Aorta (tissue), 5 donors: ENCODE measurements at regions of chr15 and their contacts with region 1.

Region 1: DNA sequence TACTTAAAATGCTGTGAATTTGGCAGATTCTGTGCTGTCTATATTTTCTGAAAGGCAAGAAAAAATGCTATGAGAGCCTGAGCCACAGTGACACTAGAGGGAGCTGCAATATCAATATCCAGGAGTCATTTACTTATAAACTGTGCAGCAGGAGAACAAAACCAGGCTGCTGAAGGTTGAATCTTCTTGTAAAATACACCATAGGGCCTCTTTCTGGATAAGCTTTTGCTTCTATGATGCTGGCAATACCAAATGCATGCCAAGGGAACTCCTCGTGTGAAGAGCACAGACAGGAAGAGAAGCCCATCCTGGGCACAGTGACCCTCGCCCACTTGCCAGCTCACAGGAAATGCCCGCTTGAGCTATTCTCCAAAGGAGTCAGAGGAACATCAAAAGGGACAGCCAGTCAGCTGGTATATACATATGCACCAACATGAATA is 48.0 kb upstream of the TSPAN3 start:
- DNase-seq: no peak
- ATAC-seq: peak; percentile 39
- H3K4me3 ChIP-seq: no peak overlapping the region
- H3K27ac ChIP-seq: no peak overlapping the region
- H3K4me1 ChIP-seq: no peaks in the 10 kb centered on the region
- H3K27me3 ChIP-seq: no peaks in the 10 kb centered on the region

Region 2: GRCh38 chr15:76963596-76963995 is 155.3 kb before region 1 on chr15:
- intact Hi-C with region 1: no loop called
- DNase-seq: no peak
- ATAC-seq: no peak
- H3K4me3 ChIP-seq: no peak overlapping the region
- H3K27ac ChIP-seq: peak overlapping the region; percentile 29 to 38
- H3K4me1 ChIP-seq: peaks cover 0 to 5% of the 10 kb centered on the region in 2 donors
- H3K27me3 ChIP-seq: no peaks in the 10 kb centered on the region

Region 3: DNA sequence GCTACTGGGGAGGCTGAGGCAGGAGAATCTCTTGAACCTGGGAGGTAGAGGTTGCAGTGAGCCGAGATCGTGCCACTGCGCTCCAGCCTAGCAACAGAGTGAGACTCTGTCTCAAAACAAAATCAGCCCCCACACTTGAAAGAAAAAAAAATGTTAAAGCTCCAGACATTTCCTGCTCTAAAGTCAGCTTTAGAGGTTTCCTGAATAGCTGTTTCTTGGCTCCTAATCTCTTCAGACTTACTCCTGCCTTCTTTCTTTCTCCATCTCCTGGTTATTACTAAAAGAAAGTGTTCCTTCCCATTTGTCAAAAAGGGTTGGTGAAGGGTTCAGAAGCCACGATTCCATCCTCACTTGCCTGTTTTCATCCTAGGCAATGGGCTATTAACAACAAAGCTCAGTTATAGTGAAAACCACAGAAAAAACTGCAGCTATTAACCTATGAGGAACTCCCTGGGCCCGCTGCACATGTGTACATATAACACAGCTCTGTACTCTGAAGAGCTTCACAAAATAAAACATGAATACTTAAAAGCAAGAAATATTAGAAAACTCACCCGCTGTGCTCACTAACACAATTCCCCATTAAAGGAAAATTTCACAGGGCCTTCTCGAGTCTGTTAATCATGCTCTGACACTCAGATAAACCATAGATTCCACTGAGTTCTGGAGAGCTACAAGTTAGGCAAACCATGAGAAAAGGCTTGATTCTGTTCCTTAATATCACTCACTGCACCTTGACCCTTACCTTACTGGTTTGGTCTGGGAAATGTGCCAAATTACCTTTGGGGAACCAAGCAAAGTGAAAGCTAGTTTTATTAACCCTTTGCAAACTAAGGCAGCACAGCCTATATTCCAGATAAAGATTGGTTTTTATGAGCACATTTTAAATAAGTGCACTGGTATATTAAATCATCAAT is 41.9 kb after region 1 on chr15:
- intact Hi-C with region 1: loop called in 1 of 2 experiments (anchors 2 kb)
- DNase-seq: no peak
- ATAC-seq: no peak
- H3K4me3 ChIP-seq: no peak overlapping the region
- H3K27ac ChIP-seq: no peak overlapping the region
- H3K4me1 ChIP-seq: peaks cover 0 to 2% of the 10 kb centered on the region in 2 donors
- H3K27me3 ChIP-seq: no peaks in the 10 kb centered on the region

Region 4: DNA sequence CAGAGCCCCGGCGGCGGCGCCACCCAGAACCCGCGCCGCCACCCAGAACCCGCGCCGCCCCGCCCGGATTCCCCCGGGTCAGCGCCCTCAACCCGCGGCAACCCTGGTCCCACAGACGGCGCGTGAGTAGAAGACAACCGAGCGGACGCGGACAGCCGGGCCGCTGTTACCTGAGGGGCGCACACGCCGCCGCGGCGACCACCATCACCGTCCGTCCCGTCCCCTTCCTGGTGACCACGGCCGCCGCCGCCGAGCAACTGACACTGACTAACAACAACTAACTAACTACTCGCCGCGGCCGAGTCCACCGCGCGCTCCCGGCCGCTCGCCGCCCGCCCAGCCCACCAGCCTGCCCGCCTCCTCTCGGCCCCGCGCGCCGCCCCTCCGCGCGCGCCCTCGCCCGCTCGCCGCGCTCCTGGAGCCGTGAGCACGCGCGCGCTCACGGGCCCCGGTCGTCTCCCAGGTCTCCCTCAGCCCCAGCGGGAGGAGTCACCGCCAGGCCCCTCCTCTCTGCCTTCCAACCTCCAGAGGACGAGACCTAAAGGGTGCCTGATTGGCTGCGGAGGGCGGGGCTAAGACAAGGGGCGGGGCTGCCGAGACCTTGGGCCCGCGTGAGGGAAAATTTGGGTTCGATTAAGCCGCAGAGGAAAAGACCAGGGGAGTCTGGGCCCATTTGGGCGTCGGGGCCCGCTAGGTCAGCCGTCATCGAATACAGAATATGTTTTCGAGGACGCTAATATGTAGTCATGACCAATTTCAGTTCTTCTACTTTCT is 301.1 kb after region 1 on chr15 and contains the start of gene PEAK1:
- intact Hi-C with region 1: no loop called
- DNase-seq: peak; percentile 100
- ATAC-seq: peak; percentile 99
- H3K4me3 ChIP-seq: peak within 1 kb of the TSS; percentile 85 to 95
- H3K27ac ChIP-seq: peak within 1 kb of the TSS; percentile 62 to 90
- H3K4me1 ChIP-seq: peaks cover 0 to under 1% of the 10 kb centered on the region in 2 donors
- H3K27me3 ChIP-seq: no peaks in the 10 kb centered on the region
- total RNA-seq, gene PEAK1: 96.0 to 105 TPM